Tibial artery (tissue), 4 donors: ENCODE measurements at regions of chr16 and their contacts with region 1.

Region 1: GRCh38 chr16:88811769-88812512 is at the start of gene APRT:
- DNase-seq: peak; percentile 90 to 97
- H3K4me3 ChIP-seq: peak within 1 kb of the TSS; percentile 77 to 93
- H3K27ac ChIP-seq: peak within 1 kb of the TSS; percentile 90 to 91
- H3K4me1 ChIP-seq: peaks cover 0 to 33% (median 26%) of the 10 kb centered on the region in 4 donors
- H3K27me3 ChIP-seq: no peaks in the 10 kb centered on the region
- CTCF ChIP-seq: peak in 1 of 2 experiments; percentile 20

Region 2: DNA sequence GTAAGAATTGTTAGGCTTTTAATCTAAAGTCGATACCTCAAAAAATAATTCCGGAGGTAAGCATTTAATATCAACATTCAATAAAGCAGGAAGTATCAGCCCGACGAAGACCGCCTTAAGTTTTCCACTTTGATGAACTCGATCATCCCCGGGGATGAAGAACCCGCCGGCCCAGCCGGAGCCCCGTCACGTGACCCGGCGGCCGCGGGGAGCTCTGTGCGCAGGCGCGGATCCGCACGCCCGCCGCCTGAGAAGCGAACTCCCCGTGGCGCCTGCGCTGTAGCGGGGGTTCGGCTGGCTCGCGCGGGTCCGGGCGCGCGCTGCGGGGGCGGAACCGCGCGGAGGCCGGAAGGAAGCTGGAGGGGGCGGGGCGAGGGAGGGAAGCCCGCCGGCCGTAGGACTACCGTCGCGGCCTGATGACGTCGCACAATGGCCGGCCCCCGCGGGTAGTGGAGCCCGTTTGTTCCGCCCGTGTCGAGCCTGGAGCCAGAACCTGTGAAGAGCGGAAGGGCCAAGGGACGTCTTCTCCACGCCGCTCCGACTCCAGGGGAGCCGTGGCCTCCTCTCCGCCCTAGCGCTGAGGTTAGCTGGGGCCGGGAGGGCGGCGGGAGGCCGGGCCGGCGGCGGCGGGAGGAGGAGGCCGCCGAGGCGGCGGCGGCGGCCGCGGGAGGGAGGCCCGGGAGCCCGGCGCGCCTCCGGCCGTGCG is 241.8 kb before region 1 on chr16 and contains the start of gene ZC3H18:
- intact Hi-C with region 1: loop called (anchors 10 kb)
- DNase-seq: peak; percentile 92 to 98
- H3K4me3 ChIP-seq: peak within 1 kb of the TSS; percentile 74 to 91
- H3K27ac ChIP-seq: peak within 1 kb of the TSS; percentile 69 to 81
- H3K4me1 ChIP-seq: peaks cover 0 to 30% (median 23%) of the 10 kb centered on the region in 4 donors
- H3K27me3 ChIP-seq: no peaks in the 10 kb centered on the region
- CTCF ChIP-seq: no peak

Region 3: GRCh38 chr16:88662843-88663606 is 148.9 kb before region 1 on chr16 and contains the start of gene MVD:
- intact Hi-C with region 1: no loop called
- DNase-seq: peak; percentile 97 to 98
- H3K4me3 ChIP-seq: peak within 1 kb of the TSS; percentile 86 to 93
- H3K27ac ChIP-seq: peak within 1 kb of the TSS; percentile 81 to 82
- H3K4me1 ChIP-seq: peaks cover 0 to 20% (median 11%) of the 10 kb centered on the region in 4 donors
- H3K27me3 ChIP-seq: no peaks in the 10 kb centered on the region
- CTCF ChIP-seq: no peak

Region 4: DNA sequence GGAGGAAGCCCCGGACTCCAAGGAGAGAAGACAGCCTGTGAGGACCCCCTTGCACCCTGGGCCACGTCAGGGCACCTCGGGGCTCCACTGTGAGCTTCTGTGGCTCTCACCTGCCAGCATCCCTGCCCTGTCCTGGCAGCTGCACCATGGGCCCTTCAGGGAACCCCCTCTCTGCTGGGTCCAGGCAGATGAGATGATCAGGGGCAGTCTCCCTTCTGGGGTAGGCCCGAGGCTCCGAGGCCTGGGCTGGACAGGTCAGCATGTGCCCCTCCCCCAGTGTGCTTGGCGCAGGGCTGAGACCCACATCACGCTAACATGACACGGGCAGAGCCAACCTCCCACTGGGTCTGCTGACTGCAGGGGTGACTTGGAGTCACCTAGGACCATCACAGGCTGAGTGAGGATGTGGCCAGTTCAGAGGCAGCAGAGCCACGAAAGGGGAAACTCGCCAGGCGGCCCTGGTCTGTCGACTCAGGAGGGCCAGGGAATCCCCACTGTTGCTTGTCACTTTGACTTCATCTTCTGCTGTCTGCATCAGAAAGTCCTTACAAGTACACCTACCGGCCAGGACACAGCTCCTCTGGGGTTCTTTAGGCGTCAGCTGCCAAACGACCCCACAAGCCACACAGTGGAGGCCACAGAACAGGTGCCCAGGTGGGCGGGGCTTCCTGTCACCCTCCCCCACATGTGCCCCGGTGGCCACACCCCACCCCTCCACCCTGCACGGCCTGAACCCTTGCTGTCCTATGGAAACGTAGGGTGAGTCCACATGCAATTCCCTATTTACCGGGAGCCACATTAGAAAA is 42.6 kb after region 1 on chr16:
- intact Hi-C with region 1: loop called (anchors 1 kb)
- DNase-seq: no peak
- H3K4me3 ChIP-seq: no peak overlapping the region
- H3K27ac ChIP-seq: no peak overlapping the region
- H3K4me1 ChIP-seq: peaks cover 0 to 33% (median 17%) of the 10 kb centered on the region in 4 donors
- H3K27me3 ChIP-seq: no peaks in the 10 kb centered on the region
- CTCF ChIP-seq: no peak